ENCODE measurements at regions of chr5 and their contacts with region 1.

Region 1: GRCh38 chr5:2780394-2781171 is 29.1 kb upstream of the IRX2 start:
- DNase-seq: peak; percentile 90 to 96
- H3K4me3 ChIP-seq: no peak overlapping the region
- H3K4me3 Mint-ChIP-seq: peak overlapping the region; percentile 26
- H3K27ac Mint-ChIP-seq: peak overlapping the region; percentile 69
- H3K4me1 ChIP-seq: peaks cover 21% of the 10 kb centered on the region
- H3K4me1 Mint-ChIP-seq: peaks cover 26% of the 10 kb centered on the region
- H3K27me3 ChIP-seq: no peaks in the 10 kb centered on the region
- H3K27me3 Mint-ChIP-seq: no peaks in the 10 kb centered on the region
- CTCF ChIP-seq: no peak

Region 2: GRCh38 chr5:2761921-2762487 is 18.6 kb before region 1 on chr5:
- CTCF ChIA-PET with region 1: no interaction called
- POLR2A ChIA-PET with region 1: no interaction called
- intact Hi-C with region 1: loop called (anchors 1 kb)
- DNase-seq: no peak
- H3K4me3 ChIP-seq: no peak overlapping the region
- H3K4me3 Mint-ChIP-seq: no peak overlapping the region
- H3K27ac Mint-ChIP-seq: peak overlapping the region; percentile 11
- H3K4me1 ChIP-seq: peaks cover 9% of the 10 kb centered on the region; the same call in 1 of the 2 replicates
- H3K4me1 Mint-ChIP-seq: peaks cover 17% of the 10 kb centered on the region
- H3K27me3 ChIP-seq: no peaks in the 10 kb centered on the region
- H3K27me3 Mint-ChIP-seq: no peaks in the 10 kb centered on the region
- CTCF ChIP-seq: no peak

Region 3: GRCh38 chr5:2801577-2802525 is 21.3 kb after region 1 on chr5:
- CTCF ChIA-PET with region 1: interaction called, 3 read pairs
- POLR2A ChIA-PET with region 1: no interaction called
- intact Hi-C with region 1: loop called (anchors 1 kb)
- DNase-seq: no peak
- H3K4me3 ChIP-seq: no peak overlapping the region
- H3K4me3 Mint-ChIP-seq: peak overlapping the region; percentile 39
- H3K27ac Mint-ChIP-seq: peak overlapping the region; percentile 24
- H3K4me1 ChIP-seq: peaks cover 27% of the 10 kb centered on the region
- H3K4me1 Mint-ChIP-seq: peaks cover 15% of the 10 kb centered on the region
- H3K27me3 ChIP-seq: no peaks in the 10 kb centered on the region
- H3K27me3 Mint-ChIP-seq: no peaks in the 10 kb centered on the region
- CTCF ChIP-seq: no peak